H1 (cell line): ENCODE measurements at regions of chr21 and their contacts with region 1.

Region 1: GRCh38 chr21:45357436-45358260 is 47.3 kb upstream of the COL18A1 start:
- DNase-seq: no peak
- H3K4me3 ChIP-seq: no peak overlapping the region
- H3K27ac ChIP-seq: no peak overlapping the region
- H3K4me1 ChIP-seq: peaks cover 6 to 16% (median 11%) of the 10 kb centered on the region in 4 experiments
- H3K27me3 ChIP-seq: no peaks in the 10 kb centered on the region; a peak in 1 of 7 replicates
- CTCF ChIP-seq: peak in 2 of 3 experiments; percentile 46 to 54; a peak in 3 of 4 replicates
- EP300 ChIP-seq: no peak
- POLR2A ChIP-seq: no peak
- RAD21 ChIP-seq: peak; percentile 17 to 48; a peak in 3 of 4 replicates

Region 2: DNA sequence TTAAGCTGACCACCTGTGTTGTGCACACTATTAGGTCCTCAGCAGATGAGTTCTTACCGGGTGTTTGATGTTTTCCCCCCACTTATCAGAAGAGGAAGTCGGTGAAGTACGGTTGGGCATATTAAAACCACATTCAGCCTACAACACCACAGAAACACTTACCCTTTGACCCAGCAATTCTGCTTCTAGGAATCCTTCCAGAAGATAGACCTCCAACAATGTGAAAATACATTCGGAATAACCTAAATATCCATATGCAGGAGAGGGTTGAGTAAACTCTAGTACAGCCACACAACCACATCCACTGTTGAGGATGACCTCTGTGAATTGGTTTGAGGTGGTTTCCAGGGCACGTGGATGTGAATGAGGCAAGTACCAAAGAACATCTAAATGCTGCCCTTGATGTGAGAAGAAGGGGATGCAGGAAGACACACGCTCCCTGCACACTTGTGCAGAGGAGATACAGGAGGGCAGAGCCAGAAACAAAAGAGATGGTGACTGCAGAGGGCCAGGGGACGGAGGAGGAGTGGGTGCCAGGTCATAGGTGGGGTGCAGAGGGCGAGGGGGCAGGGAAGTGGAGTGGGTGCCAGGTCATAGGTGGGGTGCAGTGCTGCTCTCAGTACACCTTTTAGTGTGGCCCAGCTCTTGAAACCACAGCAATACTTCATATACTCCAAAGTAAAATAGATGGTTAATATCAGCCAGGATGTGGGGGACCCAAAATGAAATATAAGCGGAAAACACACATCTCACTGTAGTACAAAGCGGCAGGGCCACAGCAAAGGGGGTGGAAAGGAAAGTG is 270.4 kb before region 1 on chr21:
- CTCF ChIA-PET with region 1: no interaction called
- POLR2A ChIA-PET with region 1: no interaction called
- DNase-seq: no peak
- H3K4me3 ChIP-seq: no peak overlapping the region
- H3K27ac ChIP-seq: no peak overlapping the region
- H3K4me1 ChIP-seq: no peaks in the 10 kb centered on the region; a peak in 1 of 7 replicates
- H3K27me3 ChIP-seq: no peaks in the 10 kb centered on the region; a peak in 1 of 7 replicates
- CTCF ChIP-seq: no peak
- EP300 ChIP-seq: no peak
- POLR2A ChIP-seq: no peak
- RAD21 ChIP-seq: no peak

Region 3: DNA sequence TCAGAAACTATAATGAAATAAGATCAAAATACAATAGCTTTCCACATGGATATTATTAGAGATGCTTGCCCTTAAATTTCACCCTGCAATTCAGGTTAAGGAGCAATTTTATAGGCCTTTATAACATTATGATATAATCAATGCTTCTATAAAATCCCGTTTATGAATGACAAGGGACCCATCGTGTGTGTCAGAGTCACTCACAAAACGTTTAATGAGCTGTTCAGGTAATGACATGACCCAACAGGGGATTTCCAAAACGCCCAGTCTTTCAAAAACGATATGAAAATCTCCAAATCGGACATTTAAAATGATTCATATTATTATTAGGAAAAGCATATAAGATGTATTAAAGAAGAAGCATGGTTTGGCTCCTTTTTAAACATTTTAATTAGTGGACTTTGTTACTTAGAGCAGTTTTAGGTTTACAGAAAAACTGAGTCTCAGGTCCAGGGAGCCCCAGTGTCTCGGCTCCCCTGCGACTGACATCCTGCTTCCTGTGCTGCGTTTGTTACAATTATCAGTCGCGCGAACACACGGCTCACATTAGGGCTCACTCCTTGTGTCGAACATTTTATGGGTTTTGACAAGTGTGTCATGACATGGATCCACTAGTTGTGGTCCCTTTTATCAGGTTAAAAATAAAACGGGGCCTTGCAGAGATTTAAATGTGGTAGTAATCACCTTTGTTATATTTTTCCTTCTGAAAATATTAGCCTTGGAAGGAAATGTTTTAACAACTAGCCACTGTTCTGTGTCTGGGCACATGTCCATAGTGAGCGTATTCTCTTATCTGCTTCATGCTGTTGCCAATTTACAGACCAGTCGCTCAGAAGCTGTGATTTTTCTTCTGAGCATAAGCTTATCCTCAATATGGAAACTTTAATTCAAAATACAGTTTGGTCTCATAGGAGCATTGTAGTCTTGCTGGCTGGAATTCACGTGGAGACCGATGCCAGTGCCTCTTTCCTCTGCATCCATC is 17.9 kb before region 1 on chr21:
- CTCF ChIA-PET with region 1: interaction called, 13 read pairs
- POLR2A ChIA-PET with region 1: no interaction called
- DNase-seq: no peak
- H3K4me3 ChIP-seq: no peak overlapping the region
- H3K27ac ChIP-seq: no peak overlapping the region
- H3K4me1 ChIP-seq: no peaks in the 10 kb centered on the region
- H3K27me3 ChIP-seq: no peaks in the 10 kb centered on the region; a peak in 2 of 7 replicates
- CTCF ChIP-seq: no peak
- EP300 ChIP-seq: no peak
- POLR2A ChIP-seq: no peak
- RAD21 ChIP-seq: no peak

Region 4: DNA sequence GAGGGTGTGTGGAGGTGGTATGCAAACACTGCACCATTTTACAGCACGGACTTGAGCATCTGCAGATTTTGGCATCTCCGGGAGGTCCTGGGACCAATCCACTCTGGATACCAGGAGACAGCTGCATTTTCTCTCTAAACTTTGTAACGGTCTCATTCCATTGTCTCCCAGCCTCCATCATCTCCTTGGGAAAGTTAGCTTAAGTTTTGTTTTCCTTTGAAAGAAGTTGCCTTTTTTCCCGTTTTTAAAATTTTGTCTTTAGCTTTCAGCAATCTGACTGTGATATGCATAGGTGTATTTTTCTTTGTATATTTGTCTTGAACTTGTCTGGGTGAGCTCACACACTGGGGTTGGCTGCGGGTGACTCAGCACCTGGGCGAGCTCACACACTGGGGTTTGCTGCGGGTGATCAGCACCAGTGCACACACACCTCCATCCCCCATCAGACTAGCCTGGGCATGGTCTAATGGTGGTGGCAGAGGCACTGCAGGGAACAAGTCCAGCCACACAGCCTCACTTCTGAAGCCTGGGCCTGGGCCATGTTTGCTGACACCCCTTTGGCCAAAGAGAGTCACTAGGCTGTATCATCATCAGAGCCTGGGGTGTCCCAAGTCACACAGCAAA is 15.2 kb after region 1 on chr21:
- CTCF ChIA-PET with region 1: interaction called, 13 read pairs
- POLR2A ChIA-PET with region 1: no interaction called
- DNase-seq: no peak
- H3K4me3 ChIP-seq: no peak overlapping the region
- H3K27ac ChIP-seq: no peak overlapping the region
- H3K4me1 ChIP-seq: peaks cover 0 to 7% (median 2%) of the 10 kb centered on the region in 4 experiments
- H3K27me3 ChIP-seq: no peaks in the 10 kb centered on the region; a peak in 2 of 7 replicates
- CTCF ChIP-seq: no peak
- EP300 ChIP-seq: no peak
- POLR2A ChIP-seq: no peak
- RAD21 ChIP-seq: no peak

Region 5: GRCh38 chr21:45386721-45387371 is 29.2 kb after region 1 on chr21:
- CTCF ChIA-PET with region 1: interaction called, 25 read pairs
- POLR2A ChIA-PET with region 1: no interaction called
- DNase-seq: no peak
- H3K4me3 ChIP-seq: no peak overlapping the region
- H3K27ac ChIP-seq: no peak overlapping the region
- H3K4me1 ChIP-seq: peaks cover 0 to 3% (median 0%) of the 10 kb centered on the region in 4 experiments; a peak in 5 of 7 replicates
- H3K27me3 ChIP-seq: 0 out of 7 replicates have a peak, but pooled peaks cover 0 to 2% (median 0%) of the 10 kb centered on the region in 4 experiments
- CTCF ChIP-seq: no peak
- EP300 ChIP-seq: no peak
- POLR2A ChIP-seq: no peak
- RAD21 ChIP-seq: no peak; a peak in 1 of 4 replicates

Region 6: GRCh38 chr21:45420061-45420985 is 62.7 kb after region 1 on chr21:
- CTCF ChIA-PET with region 1: interaction called, 24 read pairs
- POLR2A ChIA-PET with region 1: no interaction called
- DNase-seq: no peak
- H3K4me3 ChIP-seq: no peak overlapping the region
- H3K27ac ChIP-seq: no peak overlapping the region
- H3K4me1 ChIP-seq: peaks cover 4 to 31% (median 23%) of the 10 kb centered on the region in 4 experiments
- H3K27me3 ChIP-seq: no peaks in the 10 kb centered on the region
- CTCF ChIP-seq: no peak
- EP300 ChIP-seq: no peak
- POLR2A ChIP-seq: no peak
- RAD21 ChIP-seq: no peak